Mammary epithelial cell (primary cell): ENCODE measurements at regions of chr9 and their contacts with region 1.

Region 1: DNA sequence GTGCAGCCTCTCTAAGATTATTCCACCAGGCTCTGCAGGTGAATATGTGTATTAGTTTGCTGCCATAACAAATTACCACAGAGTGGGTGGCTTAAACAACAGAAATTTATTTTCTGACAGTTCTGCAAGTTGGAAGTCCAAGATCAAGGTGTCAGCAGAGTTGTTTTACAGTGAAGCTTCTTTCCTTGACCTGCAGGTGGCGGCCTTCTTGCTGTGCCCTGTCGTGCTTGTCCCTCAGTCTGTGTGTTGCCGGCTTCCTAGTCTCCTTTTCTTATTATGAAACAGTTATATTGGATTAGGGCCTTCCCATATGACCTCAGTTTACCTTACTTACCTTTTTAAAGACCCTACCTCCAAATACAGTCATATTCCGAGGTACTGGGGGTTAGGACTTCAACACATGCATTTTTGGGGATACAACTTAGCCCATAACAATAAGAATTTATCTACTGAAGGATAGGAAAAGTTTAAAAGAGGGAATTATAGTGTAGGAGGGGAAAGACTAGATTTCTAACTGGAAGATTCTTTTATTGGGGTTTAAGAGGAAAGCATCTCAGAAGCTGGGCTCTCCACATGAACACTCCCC is 97.4 kb downstream of the OSTF1 start:
- DNase-seq: no peak
- H3K4me3 ChIP-seq: no peak overlapping the region
- H3K27ac ChIP-seq: no peak overlapping the region
- H3K4me1 ChIP-seq: peaks cover 3% of the 10 kb centered on the region
- H3K27me3 ChIP-seq: no peaks in the 10 kb centered on the region
- CTCF ChIP-seq: peak; percentile 60 to 71

Region 2: GRCh38 chr9:74865177-74865576 is 320.5 kb before region 1 on chr9:
- CTCF ChIA-PET with region 1: no interaction called
- dilution Hi-C with region 1: no loop called
- in situ Hi-C with region 1: no loop called
- intact Hi-C with region 1: no loop called
- DNase-seq: no peak
- H3K4me3 ChIP-seq: no peak overlapping the region
- H3K27ac ChIP-seq: no peak overlapping the region
- H3K4me1 ChIP-seq: no peaks in the 10 kb centered on the region
- H3K27me3 ChIP-seq: no peaks in the 10 kb centered on the region
- CTCF ChIP-seq: no peak

Region 3: GRCh38 chr9:75027187-75028107 is 158.2 kb before region 1 on chr9:
- CTCF ChIA-PET with region 1: no interaction called
- dilution Hi-C with region 1: no loop called
- in situ Hi-C with region 1: no loop called
- intact Hi-C with region 1: loop called (anchors 10 kb)
- DNase-seq: peak; percentile 39
- H3K4me3 ChIP-seq: peak overlapping the region; percentile 74 to 94 (median 84)
- H3K27ac ChIP-seq: peak overlapping the region; percentile 85
- H3K4me1 ChIP-seq: no peaks in the 10 kb centered on the region
- H3K27me3 ChIP-seq: no peaks in the 10 kb centered on the region
- CTCF ChIP-seq: no peak

Region 4: GRCh38 chr9:75064307-75065025 is 121.2 kb before region 1 on chr9:
- CTCF ChIA-PET with region 1: no interaction called
- dilution Hi-C with region 1: no loop called
- in situ Hi-C with region 1: no loop called
- intact Hi-C with region 1: no loop called
- DNase-seq: peak; percentile 32
- H3K4me3 ChIP-seq: no peak overlapping the region
- H3K27ac ChIP-seq: no peak overlapping the region
- H3K4me1 ChIP-seq: peaks cover 10% of the 10 kb centered on the region
- H3K27me3 ChIP-seq: no peaks in the 10 kb centered on the region
- CTCF ChIP-seq: no peak

Region 5: DNA sequence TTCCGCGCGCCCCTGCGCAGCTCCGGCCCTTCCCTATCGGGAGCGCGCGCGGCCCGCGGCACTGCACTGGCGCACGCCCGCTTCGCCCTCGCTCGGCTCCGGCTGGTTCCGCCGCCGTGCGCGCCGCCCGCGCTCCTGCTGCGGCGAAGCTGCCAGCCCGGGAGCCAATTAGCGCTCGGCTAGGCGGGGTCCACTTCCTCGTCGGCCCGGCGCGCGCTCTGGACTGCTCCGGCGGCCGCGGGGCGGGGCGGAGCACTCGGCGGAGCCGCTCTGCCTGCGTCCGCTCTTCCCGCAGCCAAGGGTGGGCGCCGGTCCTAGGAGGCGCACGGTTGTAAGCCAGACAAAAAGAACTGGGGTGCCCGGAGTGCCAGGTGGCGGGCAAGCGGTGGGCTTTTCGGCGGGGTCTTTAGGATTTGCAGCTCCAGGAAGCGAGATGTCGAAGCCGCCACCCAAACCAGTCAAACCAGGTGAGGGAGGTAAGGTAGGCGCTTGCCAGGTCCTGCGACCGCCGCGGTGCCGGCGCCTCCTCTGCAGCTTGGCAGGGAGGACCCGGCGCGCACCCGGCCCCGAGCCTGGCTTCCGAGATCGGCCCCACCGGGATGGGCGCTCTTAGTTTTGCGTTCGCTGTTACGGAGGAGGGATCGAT is 97.3 kb before region 1 on chr9 and contains the start of gene OSTF1:
- CTCF ChIA-PET with region 1: no interaction called
- dilution Hi-C with region 1: no loop called
- in situ Hi-C with region 1: no loop called
- intact Hi-C with region 1: loop called (anchors 1 kb)
- DNase-seq: peak; percentile 97
- H3K4me3 ChIP-seq: peak within 1 kb of the TSS; percentile 95 to 96 (median 96)
- H3K27ac ChIP-seq: peak within 1 kb of the TSS; percentile 92
- H3K4me1 ChIP-seq: peaks cover 29% of the 10 kb centered on the region
- H3K27me3 ChIP-seq: no peaks in the 10 kb centered on the region
- CTCF ChIP-seq: no peak
- total RNA-seq, gene OSTF1: 31.8 to 53.1 TPM

Region 6: GRCh38 chr9:75238311-75238978 is 52.8 kb after region 1 on chr9:
- CTCF ChIA-PET with region 1: no interaction called
- dilution Hi-C with region 1: no loop called
- in situ Hi-C with region 1: no loop called
- intact Hi-C with region 1: loop called (anchors 1 kb)
- DNase-seq: peak; percentile 71
- H3K4me3 ChIP-seq: no peak overlapping the region
- H3K27ac ChIP-seq: peak overlapping the region; percentile 12
- H3K4me1 ChIP-seq: peaks cover 20% of the 10 kb centered on the region
- H3K27me3 ChIP-seq: no peaks in the 10 kb centered on the region
- CTCF ChIP-seq: peak; percentile 73 to 75

Region 7: DNA sequence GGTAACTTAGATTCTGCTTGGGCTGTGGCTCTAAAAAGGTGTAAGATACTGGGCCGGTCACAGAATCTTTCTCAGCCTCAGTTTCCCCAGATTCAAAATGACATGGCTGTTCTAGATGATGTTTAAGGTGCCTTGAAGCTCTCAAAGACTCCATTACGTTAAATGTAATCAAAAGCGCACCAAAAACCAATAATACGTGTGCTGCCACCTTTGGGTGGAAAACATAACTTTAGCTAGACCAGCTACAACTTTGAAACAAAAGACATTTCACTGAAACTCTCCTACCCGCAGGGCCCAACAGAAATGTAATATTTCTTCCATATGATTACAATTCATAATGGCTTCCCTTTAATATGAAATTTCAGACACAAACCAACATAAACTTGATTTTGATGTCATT is 669.8 kb after region 1 on chr9:
- CTCF ChIA-PET with region 1: no interaction called
- dilution Hi-C with region 1: no loop called
- in situ Hi-C with region 1: loop called in 1 of 2 experiments (anchors 25 kb)
- intact Hi-C with region 1: loop called (anchors 5 kb)
- DNase-seq: peak; percentile 16
- H3K4me3 ChIP-seq: no peak overlapping the region
- H3K27ac ChIP-seq: no peak overlapping the region
- H3K4me1 ChIP-seq: no peaks in the 10 kb centered on the region
- H3K27me3 ChIP-seq: no peaks in the 10 kb centered on the region
- CTCF ChIP-seq: peak; percentile 45 to 48